Naive thymus-derived CD4-positive, alpha-beta T cell (primary cell): ENCODE measurements at regions of chrX and their contacts with region 1.

Region 1: GRCh38 chrX:74614093-74614909 is at the start of gene RLIM:
- DNase-seq: peak; percentile 60 to 96 (median 95)
- ATAC-seq: peak; percentile 96
- H3K4me3 ChIP-seq: peak within 1 kb of the TSS; percentile 79
- H3K4me3 Mint-ChIP-seq: peak within 1 kb of the TSS; percentile 96 to 100 (median 99)
- H3K27ac ChIP-seq: peak within 1 kb of the TSS; percentile 98
- H3K27ac Mint-ChIP-seq: peak within 1 kb of the TSS; percentile 99 to 100 (median 100)
- H3K4me1 ChIP-seq: peaks cover 0 to 6% of the 10 kb centered on the region in 2 donors
- H3K4me1 Mint-ChIP-seq: peaks cover 0 to 42% (median 23%) of the 10 kb centered on the region in 7 donors
- H3K27me3 ChIP-seq: no peaks in the 10 kb centered on the region
- H3K27me3 Mint-ChIP-seq: no peaks in the 10 kb centered on the region
- total RNA-seq, gene RLIM: 31.6 to 51.3 (median 45.0) TPM

Region 2: GRCh38 chrX:73943693-73944562 is 670.4 kb before region 1 on chrX:
- CTCF ChIA-PET with region 1: no interaction called
- POLR2A ChIA-PET with region 1: no interaction called
- intact Hi-C with region 1: loop called in 1 of 2 experiments (anchors 5 kb)
- DNase-seq: peak; percentile 67 to 92 (median 87)
- ATAC-seq: peak; percentile 100
- H3K4me3 ChIP-seq: peak overlapping the region; percentile 98
- H3K4me3 Mint-ChIP-seq: peak overlapping the region; percentile 82 to 98 (median 94)
- H3K27ac ChIP-seq: peak overlapping the region; percentile 93
- H3K27ac Mint-ChIP-seq: peak overlapping the region; percentile 89 to 99 (median 96)
- H3K4me1 ChIP-seq: peaks cover 0 to 10% of the 10 kb centered on the region in 2 donors
- H3K4me1 Mint-ChIP-seq: peaks cover 12 to 49% (median 27%) of the 10 kb centered on the region in 7 donors
- H3K27me3 ChIP-seq: no peaks in the 10 kb centered on the region
- H3K27me3 Mint-ChIP-seq: peaks cover 0 to 2% (median 0%) of the 10 kb centered on the region in 5 donors

Region 3: GRCh38 chrX:74536152-74536831 is 78.0 kb before region 1 on chrX:
- CTCF ChIA-PET with region 1: no interaction called
- POLR2A ChIA-PET with region 1: interaction called, 4 read pairs
- intact Hi-C with region 1: loop called in 1 of 2 experiments (anchors 5 kb)
- DNase-seq: peak in 6 of 9 donors; percentile 6 to 35 (median 12)
- ATAC-seq: peak; percentile 73
- H3K4me3 ChIP-seq: peak overlapping the region; percentile 63
- H3K4me3 Mint-ChIP-seq: peak overlapping the region; percentile 75 to 89 (median 85)
- H3K27ac ChIP-seq: peak overlapping the region; percentile 54
- H3K27ac Mint-ChIP-seq: peak overlapping the region in 8 of 9 donors; percentile 51 to 80 (median 68)
- H3K4me1 ChIP-seq: peaks cover 0 to 3% of the 10 kb centered on the region in 2 donors
- H3K4me1 Mint-ChIP-seq: peaks cover 0 to 18% (median 7%) of the 10 kb centered on the region in 7 donors
- H3K27me3 ChIP-seq: no peaks in the 10 kb centered on the region
- H3K27me3 Mint-ChIP-seq: no peaks in the 10 kb centered on the region

Region 4: DNA sequence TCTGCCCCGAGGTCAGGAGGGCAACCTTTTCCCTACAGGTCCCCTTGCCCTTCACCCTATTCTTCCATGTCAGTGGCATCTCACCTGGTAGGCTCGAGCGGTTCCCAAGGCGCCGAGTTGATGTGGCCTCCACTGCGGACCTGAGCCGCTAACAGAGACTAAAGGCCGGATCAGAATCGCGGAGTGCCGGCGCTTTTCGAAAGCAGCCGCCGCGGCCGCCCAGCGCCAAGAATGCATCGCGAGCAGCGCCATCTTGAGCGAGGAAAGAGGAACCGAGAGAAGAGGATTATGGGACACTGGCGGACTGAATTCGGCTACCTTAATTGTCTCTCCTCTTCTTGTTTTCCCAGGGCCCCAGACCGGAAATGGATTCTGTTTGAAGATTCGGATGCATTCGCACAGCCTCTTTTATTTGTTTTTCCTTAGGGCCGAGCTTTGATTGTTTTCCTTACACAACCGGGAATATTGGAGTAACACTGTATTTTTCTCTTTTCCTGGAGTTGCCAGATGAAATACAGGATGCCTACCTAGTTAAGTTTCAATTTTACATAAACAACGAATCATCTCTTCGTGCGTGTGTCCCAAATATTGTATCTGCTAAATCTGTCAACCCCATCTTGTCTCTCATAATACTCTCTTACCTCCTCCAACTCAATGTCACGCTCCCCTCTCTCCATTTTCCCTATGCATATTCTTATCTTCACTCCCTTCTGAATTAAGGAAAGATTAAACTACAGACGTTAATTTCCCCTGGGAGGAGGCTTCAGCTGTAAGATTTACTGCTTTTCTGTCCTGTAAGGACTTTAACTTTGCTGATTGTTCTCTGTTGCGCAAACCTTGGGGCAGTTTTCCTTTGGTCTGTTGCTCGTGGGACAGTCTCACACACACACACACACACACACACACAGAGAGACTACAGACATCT is 542.0 kb after region 1 on chrX and contains the start of gene ABCB7:
- CTCF ChIA-PET with region 1: no interaction called
- POLR2A ChIA-PET with region 1: no interaction called
- intact Hi-C with region 1: loop called (anchors 1 to 5 kb)
- DNase-seq: peak; percentile 24 to 68 (median 59)
- ATAC-seq: peak; percentile 95
- H3K4me3 ChIP-seq: peak within 1 kb of the TSS; percentile 86
- H3K4me3 Mint-ChIP-seq: peak within 1 kb of the TSS; percentile 87 to 100 (median 95)
- H3K27ac ChIP-seq: peak within 1 kb of the TSS; percentile 75
- H3K27ac Mint-ChIP-seq: peak within 1 kb of the TSS; percentile 92 to 100 (median 96)
- H3K4me1 ChIP-seq: no peaks in the 10 kb centered on the region
- H3K4me1 Mint-ChIP-seq: peaks cover 10 to 63% (median 41%) of the 10 kb centered on the region in 7 donors
- H3K27me3 ChIP-seq: no peaks in the 10 kb centered on the region
- H3K27me3 Mint-ChIP-seq: no peaks in the 10 kb centered on the region
- total RNA-seq, gene ABCB7: 19.4 to 33.0 (median 26.3) TPM

Region 5: GRCh38 chrX:76148753-76149152 is 1534.5 kb after region 1 on chrX:
- CTCF ChIA-PET with region 1: no interaction called
- POLR2A ChIA-PET with region 1: interaction called, 3 read pairs
- intact Hi-C with region 1: loop called in 1 of 2 experiments (anchors 5 kb)
- DNase-seq: peak in 8 of 9 donors; percentile 25 to 77 (median 63)
- ATAC-seq: peak; percentile 45
- H3K4me3 ChIP-seq: peak overlapping the region; percentile 32
- H3K4me3 Mint-ChIP-seq: peak overlapping the region; percentile 78 to 98 (median 88)
- H3K27ac ChIP-seq: peak overlapping the region; percentile 78
- H3K27ac Mint-ChIP-seq: peak overlapping the region; percentile 93 to 100 (median 99)
- H3K4me1 ChIP-seq: peaks cover 8 to 14% of the 10 kb centered on the region in 2 donors
- H3K4me1 Mint-ChIP-seq: peaks cover 2 to 29% (median 17%) of the 10 kb centered on the region in 7 donors
- H3K27me3 ChIP-seq: no peaks in the 10 kb centered on the region
- H3K27me3 Mint-ChIP-seq: no peaks in the 10 kb centered on the region